CD4-positive, alpha-beta memory T cell (primary cell): ENCODE measurements at regions of chr3 and their contacts with region 1.

Region 1: DNA sequence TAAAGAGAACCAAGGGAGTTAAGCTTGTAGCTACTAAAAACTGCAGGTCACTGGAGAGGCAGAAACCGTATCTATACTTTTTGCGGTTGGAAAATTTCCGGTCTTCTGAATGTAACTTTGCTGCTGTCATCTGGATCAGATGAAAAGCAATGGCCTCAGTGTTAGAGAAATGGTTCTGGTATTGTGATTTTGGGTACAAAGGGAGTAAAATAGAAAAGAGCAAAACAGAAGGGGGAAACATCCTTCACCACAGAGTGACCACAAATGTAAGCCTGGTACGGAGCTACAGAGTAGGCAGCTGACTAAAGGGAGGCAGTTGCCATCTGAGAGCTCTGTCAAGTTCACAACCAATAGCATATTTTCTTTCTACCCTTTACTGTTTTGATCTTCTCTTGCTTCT is 5.6 kb downstream of the CD96 start:
- DNase-seq: peak; percentile 70 to 78 (median 74)
- H3K4me3 ChIP-seq: peak overlapping the region; percentile 20 to 70
- H3K4me3 Mint-ChIP-seq: no peak overlapping the region
- H3K27ac ChIP-seq: peak overlapping the region; percentile 89
- H3K27ac Mint-ChIP-seq: no peak overlapping the region
- H3K4me1 ChIP-seq: peaks cover 90% of the 10 kb centered on the region
- H3K4me1 Mint-ChIP-seq: peaks cover 0 to 42% (median 36%) of the 10 kb centered on the region in 4 donors
- H3K27me3 ChIP-seq: no peaks in the 10 kb centered on the region
- H3K27me3 Mint-ChIP-seq: no peaks in the 10 kb centered on the region

Region 2: DNA sequence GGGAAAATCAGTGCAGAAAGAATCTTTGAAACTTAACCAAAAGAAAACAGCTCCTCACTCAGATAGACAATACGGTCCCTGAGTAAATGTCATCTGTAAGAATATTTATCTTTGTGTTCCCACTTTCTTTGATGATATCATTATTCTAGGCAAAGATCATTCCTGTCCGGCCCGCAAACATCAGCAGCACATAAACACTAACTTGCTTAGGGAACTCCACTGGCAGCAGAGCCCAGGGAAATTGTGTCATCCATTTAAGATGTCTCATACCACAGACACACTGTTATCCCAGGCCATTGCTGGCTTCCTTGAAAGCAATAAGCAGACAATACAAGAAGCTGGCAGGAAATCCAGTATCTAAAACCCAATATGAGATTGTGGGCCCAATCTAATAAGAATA is 25.7 kb before region 1 on chr3:
- CTCF ChIA-PET with region 1: no interaction called
- POLR2A ChIA-PET with region 1: no interaction called
- intact Hi-C with region 1: no loop called
- DNase-seq: no peak
- H3K4me3 ChIP-seq: no peak overlapping the region
- H3K4me3 Mint-ChIP-seq: no peak overlapping the region
- H3K27ac ChIP-seq: no peak overlapping the region
- H3K27ac Mint-ChIP-seq: no peak overlapping the region
- H3K4me1 ChIP-seq: no peaks in the 10 kb centered on the region
- H3K4me1 Mint-ChIP-seq: peaks cover 0 to 2% (median under 1%) of the 10 kb centered on the region in 4 donors
- H3K27me3 ChIP-seq: no peaks in the 10 kb centered on the region
- H3K27me3 Mint-ChIP-seq: no peaks in the 10 kb centered on the region

Region 3: GRCh38 chr3:111566844-111567243 is 19.2 kb after region 1 on chr3:
- CTCF ChIA-PET with region 1: no interaction called
- POLR2A ChIA-PET with region 1: interaction called, 5 read pairs
- intact Hi-C with region 1: loop called (anchors 2 kb)
- DNase-seq: no peak
- H3K4me3 ChIP-seq: no peak overlapping the region
- H3K4me3 Mint-ChIP-seq: peak overlapping the region in 2 of 8 donors; percentile 14 to 43
- H3K27ac ChIP-seq: no peak overlapping the region
- H3K27ac Mint-ChIP-seq: peak overlapping the region in 6 of 7 donors; percentile 34 to 43 (median 38)
- H3K4me1 ChIP-seq: peaks cover 52% of the 10 kb centered on the region
- H3K4me1 Mint-ChIP-seq: peaks cover 49 to 84% (median 75%) of the 10 kb centered on the region in 4 donors
- H3K27me3 ChIP-seq: no peaks in the 10 kb centered on the region
- H3K27me3 Mint-ChIP-seq: no peaks in the 10 kb centered on the region

Region 4: GRCh38 chr3:111571907-111572460 is 24.4 kb after region 1 on chr3:
- CTCF ChIA-PET with region 1: no interaction called
- POLR2A ChIA-PET with region 1: interaction called, 11 read pairs
- intact Hi-C with region 1: loop called (anchors 2 kb)
- DNase-seq: peak in 1 of 5 donors; percentile 45
- H3K4me3 ChIP-seq: no peak overlapping the region
- H3K4me3 Mint-ChIP-seq: peak overlapping the region in 2 of 8 donors; percentile 14 to 40
- H3K27ac ChIP-seq: no peak overlapping the region
- H3K27ac Mint-ChIP-seq: peak overlapping the region; percentile 33 to 84 (median 47)
- H3K4me1 ChIP-seq: peaks cover 24% of the 10 kb centered on the region
- H3K4me1 Mint-ChIP-seq: peaks cover 31 to 62% (median 52%) of the 10 kb centered on the region in 4 donors
- H3K27me3 ChIP-seq: no peaks in the 10 kb centered on the region
- H3K27me3 Mint-ChIP-seq: no peaks in the 10 kb centered on the region

Region 5: DNA sequence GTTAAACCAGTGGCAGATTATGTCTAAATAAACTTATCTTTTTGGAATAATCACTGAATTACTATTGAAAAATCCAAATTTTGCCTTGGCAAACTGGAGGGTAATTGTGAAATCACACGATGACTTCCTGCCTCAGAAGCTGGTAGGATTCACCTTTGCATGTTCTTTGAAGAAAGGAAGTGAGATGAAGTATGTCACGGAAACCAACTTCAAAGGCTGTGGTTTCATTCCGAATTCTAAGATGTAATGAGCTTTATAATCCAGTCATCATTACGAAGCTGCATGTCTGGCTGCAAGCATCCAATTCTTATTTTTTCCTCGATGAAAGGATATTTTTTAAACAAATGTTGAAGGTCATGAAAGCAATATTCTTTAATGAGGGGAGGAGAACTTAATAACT is 62.6 kb after region 1 on chr3:
- CTCF ChIA-PET with region 1: interaction called, 19 read pairs
- POLR2A ChIA-PET with region 1: interaction called, 58 read pairs
- intact Hi-C with region 1: loop called (anchors 1 kb)
- DNase-seq: peak; percentile 82 to 90 (median 85)
- H3K4me3 ChIP-seq: peak overlapping the region in 1 of 2 donors; percentile 20
- H3K4me3 Mint-ChIP-seq: peak overlapping the region; percentile 4 to 87 (median 78)
- H3K27ac ChIP-seq: peak overlapping the region; percentile 65
- H3K27ac Mint-ChIP-seq: peak overlapping the region; percentile 91 to 99 (median 95)
- H3K4me1 ChIP-seq: peaks cover 55% of the 10 kb centered on the region
- H3K4me1 Mint-ChIP-seq: peaks cover 56 to 82% (median 67%) of the 10 kb centered on the region in 4 donors
- H3K27me3 ChIP-seq: no peaks in the 10 kb centered on the region
- H3K27me3 Mint-ChIP-seq: no peaks in the 10 kb centered on the region